Mammary epithelial cell (primary cell): ENCODE measurements at regions of chr10 and their contacts with region 1.

Region 1: GRCh38 chr10:97037365-97038361 is 148.1 kb downstream of the SLIT1 start:
- DNase-seq: peak; percentile 65
- H3K4me3 ChIP-seq: peak overlapping the region in 1 of 3 experiments; percentile 38
- H3K27ac ChIP-seq: no peak overlapping the region
- H3K4me1 ChIP-seq: peaks cover 3% of the 10 kb centered on the region
- H3K27me3 ChIP-seq: no peaks in the 10 kb centered on the region
- CTCF ChIP-seq: peak; percentile 87 to 90

Region 2: GRCh38 chr10:96374985-96375830 is 662.5 kb before region 1 on chr10:
- CTCF ChIA-PET with region 1: no interaction called
- dilution Hi-C with region 1: no loop called
- in situ Hi-C with region 1: no loop called
- intact Hi-C with region 1: loop called (anchors 5 kb)
- DNase-seq: peak; percentile 87
- H3K4me3 ChIP-seq: peak overlapping the region; percentile 36 to 48 (median 45)
- H3K27ac ChIP-seq: no peak overlapping the region
- H3K4me1 ChIP-seq: peaks cover 3% of the 10 kb centered on the region
- H3K27me3 ChIP-seq: no peaks in the 10 kb centered on the region
- CTCF ChIP-seq: peak; percentile 97 to 99

Region 3: GRCh38 chr10:96919785-96920430 is 117.8 kb before region 1 on chr10:
- CTCF ChIA-PET with region 1: no interaction called
- dilution Hi-C with region 1: no loop called
- in situ Hi-C with region 1: no loop called
- intact Hi-C with region 1: no loop called
- DNase-seq: peak; percentile 48
- H3K4me3 ChIP-seq: no peak overlapping the region
- H3K27ac ChIP-seq: no peak overlapping the region
- H3K4me1 ChIP-seq: no peaks in the 10 kb centered on the region
- H3K27me3 ChIP-seq: no peaks in the 10 kb centered on the region
- CTCF ChIP-seq: no peak

Region 4: GRCh38 chr10:97025613-97026242 is 11.9 kb before region 1 on chr10:
- CTCF ChIA-PET with region 1: interaction called, 12 read pairs
- dilution Hi-C with region 1: no loop called
- in situ Hi-C with region 1: no loop called
- intact Hi-C with region 1: no loop called
- DNase-seq: peak; percentile 20
- H3K4me3 ChIP-seq: no peak overlapping the region
- H3K27ac ChIP-seq: no peak overlapping the region
- H3K4me1 ChIP-seq: no peaks in the 10 kb centered on the region
- H3K27me3 ChIP-seq: peaks cover 1% of the 10 kb centered on the region
- CTCF ChIP-seq: peak; percentile 55 to 70

Region 5: GRCh38 chr10:97096261-97097083 is 58.8 kb after region 1 on chr10:
- CTCF ChIA-PET with region 1: no interaction called
- dilution Hi-C with region 1: no loop called
- in situ Hi-C with region 1: no loop called
- intact Hi-C with region 1: no loop called
- DNase-seq: no peak
- H3K4me3 ChIP-seq: no peak overlapping the region
- H3K27ac ChIP-seq: no peak overlapping the region
- H3K4me1 ChIP-seq: no peaks in the 10 kb centered on the region
- H3K27me3 ChIP-seq: peaks cover 10% of the 10 kb centered on the region
- CTCF ChIP-seq: no peak

Region 6: DNA sequence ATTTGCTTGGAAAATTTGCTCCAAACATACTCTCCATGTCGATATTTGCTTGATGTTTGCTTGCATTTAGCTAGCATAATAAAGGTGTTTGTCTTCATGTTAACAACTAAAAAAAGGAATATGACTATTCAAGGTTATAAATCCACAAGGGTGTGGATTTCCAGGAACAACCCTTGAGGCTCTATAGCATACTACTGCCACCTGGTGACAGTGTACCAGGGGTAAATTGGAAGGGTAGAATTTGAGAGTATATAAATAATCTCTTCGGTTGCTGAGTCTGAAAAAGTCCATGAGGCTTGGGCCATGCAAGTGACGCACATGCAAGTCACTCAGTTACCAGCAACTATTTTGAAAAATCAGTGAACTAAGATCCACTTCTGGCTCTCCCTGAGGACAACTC is 79.7 kb after region 1 on chr10:
- CTCF ChIA-PET with region 1: no interaction called
- dilution Hi-C with region 1: no loop called
- in situ Hi-C with region 1: no loop called
- intact Hi-C with region 1: loop called (anchors 1 kb)
- DNase-seq: peak; percentile 10
- H3K4me3 ChIP-seq: no peak overlapping the region
- H3K27ac ChIP-seq: no peak overlapping the region
- H3K4me1 ChIP-seq: no peaks in the 10 kb centered on the region
- H3K27me3 ChIP-seq: peaks cover 5% of the 10 kb centered on the region
- CTCF ChIP-seq: peak; percentile 28 to 43

Region 7: DNA sequence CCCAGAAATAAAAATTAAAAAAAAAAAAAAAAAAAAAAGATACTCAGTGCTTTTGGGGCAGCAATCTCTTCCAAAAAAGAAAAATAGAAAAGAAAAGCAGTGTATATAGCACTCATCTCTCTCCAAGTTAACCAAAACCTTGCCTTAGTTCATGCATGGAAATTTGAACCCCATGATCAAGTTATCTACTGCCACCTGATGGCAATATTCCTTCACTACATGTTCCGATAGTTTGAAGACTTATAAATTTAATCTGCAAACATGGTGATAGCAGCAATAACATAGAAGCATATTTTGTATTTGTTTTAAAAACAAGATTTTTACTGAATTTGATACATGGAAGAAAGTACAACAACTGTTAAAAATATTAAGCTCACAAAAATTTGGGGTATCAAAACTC is 196.7 kb after region 1 on chr10:
- CTCF ChIA-PET with region 1: no interaction called
- dilution Hi-C with region 1: no loop called
- in situ Hi-C with region 1: no loop called
- intact Hi-C with region 1: loop called (anchors 1 kb)
- DNase-seq: peak; percentile 19
- H3K4me3 ChIP-seq: no peak overlapping the region
- H3K27ac ChIP-seq: no peak overlapping the region
- H3K4me1 ChIP-seq: no peaks in the 10 kb centered on the region
- H3K27me3 ChIP-seq: no peaks in the 10 kb centered on the region
- CTCF ChIP-seq: peak; percentile 50 to 57

Region 8: DNA sequence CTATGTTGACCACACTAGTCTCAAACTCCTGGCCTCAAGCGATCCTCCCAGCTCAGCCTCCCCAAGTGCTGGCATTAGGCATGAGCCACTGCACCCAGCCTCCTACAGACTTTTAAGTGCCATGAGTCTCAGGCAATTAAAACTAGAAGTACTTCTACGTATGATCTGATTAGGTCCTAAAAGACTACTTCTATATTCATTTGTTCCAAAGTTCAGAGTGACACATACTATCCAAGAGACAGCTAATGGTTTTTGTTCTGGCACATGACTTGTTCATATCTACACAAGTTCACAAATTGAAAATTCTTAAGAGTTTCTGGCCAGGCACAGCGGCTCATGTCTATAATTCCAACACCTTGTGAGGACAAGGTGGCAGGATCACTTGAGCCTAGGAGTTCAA is 243.1 kb after region 1 on chr10:
- CTCF ChIA-PET with region 1: no interaction called
- dilution Hi-C with region 1: no loop called
- in situ Hi-C with region 1: no loop called
- intact Hi-C with region 1: no loop called
- DNase-seq: no peak
- H3K4me3 ChIP-seq: no peak overlapping the region
- H3K27ac ChIP-seq: no peak overlapping the region
- H3K4me1 ChIP-seq: no peaks in the 10 kb centered on the region
- H3K27me3 ChIP-seq: no peaks in the 10 kb centered on the region
- CTCF ChIP-seq: no peak

Region 9: GRCh38 chr10:97508342-97508741 is 470.7 kb after region 1 on chr10:
- CTCF ChIA-PET with region 1: no interaction called
- dilution Hi-C with region 1: no loop called
- in situ Hi-C with region 1: no loop called
- intact Hi-C with region 1: no loop called
- DNase-seq: peak; percentile 55
- H3K4me3 ChIP-seq: no peak overlapping the region
- H3K27ac ChIP-seq: no peak overlapping the region
- H3K4me1 ChIP-seq: peaks cover 2% of the 10 kb centered on the region
- H3K27me3 ChIP-seq: no peaks in the 10 kb centered on the region
- CTCF ChIP-seq: no peak